GM12878 (cell line): ENCODE measurements at regions of chr19 and their contacts with region 1.

Region 1: GRCh38 chr19:35352448-35353304 is 5.0 kb downstream of the FFAR1 start:
- DNase-seq: peak; percentile 73
- ATAC-seq: peak; percentile 54
- H3K4me3 ChIP-seq: no peak overlapping the region
- H3K27ac ChIP-seq: no peak overlapping the region; the same call in 1 of the 2 replicates
- H3K4me1 ChIP-seq: peaks cover 44% of the 10 kb centered on the region
- H3K27me3 ChIP-seq: no peaks in the 10 kb centered on the region
- CTCF ChIP-seq: peak; percentile 82 to 95 (median 86); a peak in 5 of 6 replicates
- EP300 ChIP-seq: no peak
- POLR2A ChIP-seq: peak; percentile 33; the same call in 1 of the 2 replicates
- RAD21 ChIP-seq: peak; percentile 100

Region 2: GRCh38 chr19:35224681-35225571 is 127.8 kb before region 1 on chr19:
- CTCF ChIA-PET with region 1: no interaction called
- POLR2A ChIA-PET with region 1: no interaction called
- RAD21 ChIA-PET with region 1: no interaction called
- SMC1A ChIA-PET with region 1: no interaction called
- in situ Hi-C with region 1: no loop called
- intact Hi-C with region 1: no loop called
- DNase-seq: no peak
- ATAC-seq: peak; percentile 71
- H3K4me3 ChIP-seq: no peak overlapping the region
- H3K27ac ChIP-seq: no peak overlapping the region
- H3K4me1 ChIP-seq: no peaks in the 10 kb centered on the region
- H3K27me3 ChIP-seq: 0 out of 4 replicates have a peak, but pooled peaks cover 0 to 2% of the 10 kb centered on the region in 2 experiments
- CTCF ChIP-seq: no peak
- EP300 ChIP-seq: no peak
- POLR2A ChIP-seq: no peak
- RAD21 ChIP-seq: no peak

Region 3: GRCh38 chr19:35330475-35330874 is 22.2 kb before region 1 on chr19:
- CTCF ChIA-PET with region 1: interaction called, 61 read pairs
- POLR2A ChIA-PET with region 1: interaction called, 135 read pairs
- RAD21 ChIA-PET with region 1: interaction called, 127 read pairs
- SMC1A ChIA-PET with region 1: interaction called, 152 read pairs
- in situ Hi-C with region 1: no loop called
- intact Hi-C with region 1: loop called (anchors 2 kb)
- DNase-seq: peak; percentile 93
- ATAC-seq: peak; percentile 56
- H3K4me3 ChIP-seq: peak overlapping the region; percentile 92
- H3K27ac ChIP-seq: peak overlapping the region; percentile 93
- H3K4me1 ChIP-seq: peaks cover 35% of the 10 kb centered on the region
- H3K27me3 ChIP-seq: no peaks in the 10 kb centered on the region
- CTCF ChIP-seq: no peak
- EP300 ChIP-seq: peak in 1 of 2 experiments; percentile 58; a peak in 2 of 4 replicates
- POLR2A ChIP-seq: peak; percentile 85
- RAD21 ChIP-seq: no peak

Region 4: GRCh38 chr19:35404879-35405622 is 52.4 kb after region 1 on chr19:
- CTCF ChIA-PET with region 1: interaction called, 24 read pairs
- POLR2A ChIA-PET with region 1: interaction called, 7 read pairs
- RAD21 ChIA-PET with region 1: interaction called, 52 read pairs
- SMC1A ChIA-PET with region 1: interaction called, 38 read pairs
- in situ Hi-C with region 1: no loop called
- intact Hi-C with region 1: loop called (anchors 1 kb)
- DNase-seq: peak; percentile 95
- ATAC-seq: peak; percentile 80
- H3K4me3 ChIP-seq: no peak overlapping the region
- H3K27ac ChIP-seq: peak overlapping the region; percentile 79
- H3K4me1 ChIP-seq: peaks cover 57% of the 10 kb centered on the region
- H3K27me3 ChIP-seq: no peaks in the 10 kb centered on the region
- CTCF ChIP-seq: no peak
- EP300 ChIP-seq: peak; percentile 90
- POLR2A ChIP-seq: no peak
- RAD21 ChIP-seq: no peak

Region 5: GRCh38 chr19:35457173-35457572 is 104.5 kb after region 1 on chr19:
- CTCF ChIA-PET with region 1: interaction called, 53 read pairs
- POLR2A ChIA-PET with region 1: interaction called, 28 read pairs
- RAD21 ChIA-PET with region 1: interaction called, 109 read pairs
- SMC1A ChIA-PET with region 1: interaction called, 123 read pairs
- in situ Hi-C with region 1: no loop called
- intact Hi-C with region 1: no loop called
- DNase-seq: peak; percentile 68
- ATAC-seq: peak; percentile 37
- H3K4me3 ChIP-seq: no peak overlapping the region
- H3K27ac ChIP-seq: peak overlapping the region; percentile 89
- H3K4me1 ChIP-seq: peaks cover 63% of the 10 kb centered on the region
- H3K27me3 ChIP-seq: no peaks in the 10 kb centered on the region
- CTCF ChIP-seq: no peak
- EP300 ChIP-seq: peak; percentile 19 to 48; a peak in 2 of 4 replicates
- POLR2A ChIP-seq: no peak
- RAD21 ChIP-seq: no peak

Region 6: DNA sequence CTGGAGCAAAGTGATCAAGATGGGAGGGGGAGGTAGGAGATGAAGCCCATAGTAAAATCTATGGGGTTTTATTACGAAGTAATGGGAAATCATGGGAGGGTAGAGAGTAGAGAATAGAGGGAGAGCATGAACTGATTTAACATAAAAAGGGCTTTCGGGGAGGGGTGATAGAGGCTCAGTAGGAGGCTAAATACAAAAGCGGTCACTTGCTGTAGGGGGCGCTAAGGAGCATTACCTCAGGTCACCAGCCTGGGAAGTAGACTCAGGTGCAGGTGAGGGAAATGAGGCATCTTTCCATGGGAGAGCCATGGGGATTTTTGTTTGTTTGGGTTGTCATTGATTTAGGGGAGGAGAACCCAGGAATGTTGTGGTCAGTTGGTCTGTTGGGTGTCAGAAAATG is 123.5 kb after region 1 on chr19:
- CTCF ChIA-PET with region 1: interaction called, 168 read pairs
- POLR2A ChIA-PET with region 1: interaction called, 35 read pairs
- RAD21 ChIA-PET with region 1: interaction called, 143 read pairs
- SMC1A ChIA-PET with region 1: interaction called, 134 read pairs
- in situ Hi-C with region 1: no loop called
- intact Hi-C with region 1: no loop called
- DNase-seq: no peak
- ATAC-seq: no peak
- H3K4me3 ChIP-seq: no peak overlapping the region
- H3K27ac ChIP-seq: no peak overlapping the region
- H3K4me1 ChIP-seq: no peaks in the 10 kb centered on the region
- H3K27me3 ChIP-seq: no peaks in the 10 kb centered on the region
- CTCF ChIP-seq: peak in 2 of 3 experiments; percentile 30 to 32; a peak in 3 of 6 replicates
- EP300 ChIP-seq: no peak
- POLR2A ChIP-seq: no peak
- RAD21 ChIP-seq: no peak

Region 7: GRCh38 chr19:35509861-35510625 is 157.4 kb after region 1 on chr19:
- CTCF ChIA-PET with region 1: interaction called, 18 read pairs
- POLR2A ChIA-PET with region 1: interaction called, 6 read pairs
- RAD21 ChIA-PET with region 1: interaction called, 15 read pairs
- SMC1A ChIA-PET with region 1: interaction called, 15 read pairs
- in situ Hi-C with region 1: no loop called
- intact Hi-C with region 1: no loop called
- DNase-seq: no peak
- ATAC-seq: peak; percentile 88
- H3K4me3 ChIP-seq: peak overlapping the region; percentile 74
- H3K27ac ChIP-seq: peak overlapping the region; percentile 52
- H3K4me1 ChIP-seq: peaks cover 8% of the 10 kb centered on the region
- H3K27me3 ChIP-seq: no peaks in the 10 kb centered on the region; a peak in 1 of 4 replicates
- CTCF ChIP-seq: peak; percentile 96; a peak in 5 of 6 replicates
- EP300 ChIP-seq: no peak
- POLR2A ChIP-seq: no peak; the same call in 1 of the 2 replicates
- RAD21 ChIP-seq: peak; percentile 71